ENCODE measurements at regions of chr12 and their contacts with region 1.

Region 1: GRCh38 chr12:81863406-81863805 is 104.3 kb upstream of the PPFIA2 start:
- DNase-seq: no peak
- ATAC-seq: no peak
- H3K4me3 Mint-ChIP-seq: no peak overlapping the region
- H3K27ac Mint-ChIP-seq: no peak overlapping the region
- H3K4me1 Mint-ChIP-seq: no peaks in the 10 kb centered on the region
- H3K27me3 Mint-ChIP-seq: no peaks in the 10 kb centered on the region

Region 2: DNA sequence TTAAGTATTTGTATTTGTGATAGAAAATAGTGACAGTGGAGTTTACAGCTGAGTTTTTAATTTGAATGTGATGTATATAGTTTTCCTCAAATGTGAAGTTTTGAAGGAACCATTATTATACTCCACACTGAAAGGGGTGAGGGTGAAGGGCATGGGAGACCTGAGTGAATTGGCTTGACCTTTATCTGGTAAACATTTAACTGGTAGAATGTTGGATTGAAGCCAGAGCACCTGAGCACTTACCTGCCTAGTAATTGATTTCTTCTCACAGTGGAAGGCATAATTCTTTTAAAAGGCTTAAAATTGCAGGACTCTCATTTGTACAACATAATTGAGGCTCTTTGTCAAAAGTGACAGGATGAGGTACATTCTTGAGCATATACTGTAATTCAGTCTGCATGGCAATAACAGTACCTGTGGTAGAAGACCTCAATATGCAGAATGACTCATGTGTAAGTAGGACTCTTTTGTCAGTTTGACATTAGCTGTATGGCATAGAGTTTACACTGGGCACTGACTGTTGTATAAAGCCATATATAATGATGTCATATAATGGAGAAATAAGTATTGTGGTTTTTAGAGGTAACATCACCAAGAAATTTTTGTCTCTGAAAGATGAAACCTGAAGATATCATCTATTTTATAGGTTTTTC is 1132.9 kb after region 1 on chr12:
- CTCF ChIA-PET with region 1: no interaction called
- POLR2A ChIA-PET with region 1: no interaction called
- intact Hi-C with region 1: loop called in 1 of 2 experiments (anchors 10 kb)
- DNase-seq: no peak
- ATAC-seq: peak; percentile 94
- H3K4me3 Mint-ChIP-seq: no peak overlapping the region
- H3K27ac Mint-ChIP-seq: no peak overlapping the region
- H3K4me1 Mint-ChIP-seq: no peaks in the 10 kb centered on the region
- H3K27me3 Mint-ChIP-seq: no peaks in the 10 kb centered on the region

Measured in activated CD4-positive, alpha-beta T cell treated with anti-CD3 and anti-CD28 coated beads for 36 hours (primary cell).